Activated B cell treated with CpG ODN at 0.5 μM for 24 hours (primary cell): ENCODE measurements at regions of chr16 and their contacts with region 1.

Region 1: DNA sequence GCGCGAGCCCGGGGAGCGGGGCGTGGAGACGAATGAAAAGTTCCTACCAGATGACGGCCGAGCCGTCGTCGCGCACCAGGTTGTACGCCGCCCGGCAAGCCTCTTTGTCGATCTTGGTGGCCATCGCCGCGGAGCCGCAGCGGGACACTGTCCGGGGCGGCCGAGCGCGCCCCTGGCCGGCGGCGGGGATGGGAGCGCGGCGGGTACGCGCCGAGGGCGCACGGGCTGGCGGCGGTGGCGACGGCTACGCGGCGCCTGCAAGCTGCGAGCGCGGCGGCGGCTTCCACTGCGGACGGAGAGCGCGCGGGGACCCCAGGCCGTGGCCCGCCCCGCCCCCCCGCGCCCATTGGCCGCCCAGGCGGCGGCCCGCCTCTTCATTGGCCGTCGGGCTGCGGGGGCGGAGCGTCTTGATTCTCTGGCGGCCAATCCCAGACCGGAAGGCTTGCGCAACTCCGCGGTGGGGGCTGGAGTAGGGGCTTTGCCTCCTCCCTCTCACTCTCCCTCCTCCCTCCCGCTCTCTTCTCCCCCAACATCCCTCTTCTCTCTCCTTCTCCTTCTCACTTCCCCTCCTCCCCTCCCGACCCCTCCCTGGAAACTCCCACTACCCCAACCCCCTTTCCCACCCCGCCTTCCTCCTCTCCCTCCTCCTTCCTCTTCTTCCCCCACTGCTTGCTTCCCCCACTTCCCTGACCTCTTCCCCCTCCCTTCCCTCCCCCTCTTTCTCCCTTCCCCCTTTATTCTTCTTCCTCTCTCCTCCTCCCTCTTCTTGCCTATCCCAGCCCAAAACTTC is at the start of gene COTL1:
- DNase-seq: peak; percentile 86
- ATAC-seq: peak; percentile 87
- H3K4me3 Mint-ChIP-seq: peak within 1 kb of the TSS; percentile 94
- H3K27ac Mint-ChIP-seq: peak within 1 kb of the TSS; percentile 84
- H3K4me1 Mint-ChIP-seq: peaks cover 77% of the 10 kb centered on the region
- H3K27me3 Mint-ChIP-seq: no peaks in the 10 kb centered on the region
- CTCF ChIP-seq: no peak
- total RNA-seq, gene COTL1: 487 and 525 TPM in 2 replicates

Region 2: GRCh38 chr16:84294531-84295142 is 323.3 kb before region 1 on chr16 and contains the start of gene WFDC1:
- CTCF ChIA-PET with region 1: no interaction called
- POLR2A ChIA-PET with region 1: no interaction called
- intact Hi-C with region 1: no loop called
- DNase-seq: no peak
- ATAC-seq: no peak
- H3K4me3 Mint-ChIP-seq: no peak within 1 kb of the TSS
- H3K27ac Mint-ChIP-seq: no peak within 1 kb of the TSS
- H3K4me1 Mint-ChIP-seq: no peaks in the 10 kb centered on the region
- H3K27me3 Mint-ChIP-seq: peaks cover 43% of the 10 kb centered on the region
- CTCF ChIP-seq: no peak
- total RNA-seq, gene WFDC1: not detected in 2 replicates

Region 3: GRCh38 chr16:84562174-84562815 is 55.7 kb before region 1 on chr16:
- CTCF ChIA-PET with region 1: interaction called, 13 read pairs
- POLR2A ChIA-PET with region 1: interaction called, 12 read pairs
- intact Hi-C with region 1: loop called (anchors 1 kb)
- DNase-seq: peak; percentile 38
- ATAC-seq: peak; percentile 89
- H3K4me3 Mint-ChIP-seq: peak overlapping the region; percentile 32
- H3K27ac Mint-ChIP-seq: peak overlapping the region; percentile 87
- H3K4me1 Mint-ChIP-seq: peaks cover 36% of the 10 kb centered on the region
- H3K27me3 Mint-ChIP-seq: no peaks in the 10 kb centered on the region
- CTCF ChIP-seq: no peak

Region 4: DNA sequence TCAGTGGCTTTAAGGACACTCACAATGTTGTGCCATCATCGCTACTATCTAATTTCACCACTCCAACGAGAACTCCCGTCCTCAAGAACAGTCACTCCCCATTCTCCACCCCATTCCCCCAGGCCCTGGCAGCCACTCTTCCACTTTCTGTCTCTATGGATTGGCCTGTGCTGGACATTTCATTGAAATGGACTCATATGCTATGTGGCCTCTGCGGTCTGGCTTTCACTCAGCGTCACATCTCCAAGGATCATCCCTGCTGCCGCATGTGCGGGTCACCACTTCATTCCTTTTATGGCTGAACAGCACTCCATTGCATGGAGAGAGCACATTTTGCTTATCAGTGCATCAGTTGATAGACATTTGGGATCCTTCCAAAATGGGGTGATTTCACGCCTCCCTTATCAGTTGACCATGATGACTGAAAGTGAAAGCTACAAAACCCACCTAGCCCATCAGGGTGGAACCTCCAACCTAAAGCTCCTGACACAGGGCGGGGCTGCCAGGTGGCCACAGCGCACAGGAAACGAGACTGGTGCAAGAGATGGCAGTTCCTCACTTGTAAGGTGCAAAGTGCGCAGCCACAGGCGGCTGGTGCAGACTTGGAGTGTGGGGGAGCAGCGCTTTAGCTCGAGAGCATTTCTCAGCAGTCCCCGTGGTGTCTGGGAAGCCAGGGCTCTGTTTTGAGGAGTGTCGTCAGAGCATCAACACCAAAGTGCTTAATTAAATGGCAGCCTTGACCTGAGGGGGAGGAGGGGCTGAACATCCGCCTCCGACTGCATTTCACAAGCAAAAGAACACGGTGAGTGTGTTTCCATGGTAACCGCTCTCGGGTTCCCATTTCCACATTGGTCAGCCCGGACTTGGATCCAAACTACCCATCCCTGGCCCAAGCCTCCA is 23.9 kb before region 1 on chr16:
- CTCF ChIA-PET with region 1: interaction called, 9 read pairs
- POLR2A ChIA-PET with region 1: interaction called, 333 read pairs
- intact Hi-C with region 1: loop called (anchors 1 kb)
- DNase-seq: peak; percentile 65
- ATAC-seq: peak; percentile 82
- H3K4me3 Mint-ChIP-seq: peak overlapping the region; percentile 91
- H3K27ac Mint-ChIP-seq: peak overlapping the region; percentile 91
- H3K4me1 Mint-ChIP-seq: peaks cover 80% of the 10 kb centered on the region
- H3K27me3 Mint-ChIP-seq: no peaks in the 10 kb centered on the region
- CTCF ChIP-seq: no peak

Region 5: GRCh38 chr16:84629580-84629979 is 11.6 kb after region 1 on chr16:
- CTCF ChIA-PET with region 1: no interaction called
- POLR2A ChIA-PET with region 1: no interaction called
- intact Hi-C with region 1: no loop called
- DNase-seq: no peak
- ATAC-seq: no peak
- H3K4me3 Mint-ChIP-seq: no peak overlapping the region
- H3K27ac Mint-ChIP-seq: no peak overlapping the region
- H3K4me1 Mint-ChIP-seq: peaks cover 27% of the 10 kb centered on the region
- H3K27me3 Mint-ChIP-seq: no peaks in the 10 kb centered on the region
- CTCF ChIP-seq: no peak

Region 6: DNA sequence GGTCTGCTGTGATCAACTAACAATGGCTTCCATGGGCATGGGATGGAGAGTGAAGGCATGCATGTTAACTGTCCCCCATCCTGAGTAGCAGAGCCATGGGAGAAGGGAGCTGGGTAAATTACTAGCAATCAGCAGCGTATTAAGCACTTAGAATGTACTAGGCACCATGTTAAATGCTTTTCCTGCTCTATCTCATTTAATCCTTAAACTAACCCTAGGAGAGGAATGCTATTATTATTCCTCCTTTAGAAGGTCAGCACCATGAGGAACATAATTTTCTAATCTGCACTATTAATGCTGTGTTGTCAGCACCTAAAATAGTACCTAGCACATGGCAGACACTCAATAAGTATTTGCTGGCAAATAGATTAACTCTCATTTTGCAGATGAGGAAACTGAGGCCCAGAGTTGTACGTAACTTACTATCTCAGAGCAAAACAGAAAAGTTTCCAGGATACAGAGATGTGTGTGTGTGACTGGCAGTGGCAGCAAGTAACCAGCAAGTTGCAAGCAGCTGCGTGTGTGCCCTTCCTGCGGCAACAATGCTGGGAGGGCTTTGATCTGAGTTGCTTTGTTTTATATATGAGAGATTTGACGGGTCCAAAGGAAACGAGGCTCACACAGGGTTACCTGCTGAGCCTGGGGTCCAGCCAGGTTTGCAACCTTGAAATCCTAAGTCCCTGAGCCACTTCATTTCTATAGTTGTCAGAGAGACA is 23.8 kb after region 1 on chr16:
- CTCF ChIA-PET with region 1: interaction called, 6 read pairs
- POLR2A ChIA-PET with region 1: interaction called, 3 read pairs
- intact Hi-C with region 1: loop called (anchors 2 kb)
- DNase-seq: no peak
- ATAC-seq: no peak
- H3K4me3 Mint-ChIP-seq: peak overlapping the region; percentile 38
- H3K27ac Mint-ChIP-seq: peak overlapping the region; percentile 94
- H3K4me1 Mint-ChIP-seq: peaks cover 80% of the 10 kb centered on the region
- H3K27me3 Mint-ChIP-seq: no peaks in the 10 kb centered on the region
- CTCF ChIP-seq: no peak

Region 7: GRCh38 chr16:84726079-84726668 is 108.2 kb after region 1 on chr16:
- CTCF ChIA-PET with region 1: interaction called, 69 read pairs
- POLR2A ChIA-PET with region 1: no interaction called
- intact Hi-C with region 1: loop called (anchors 1 kb)
- DNase-seq: peak; percentile 73
- ATAC-seq: peak; percentile 51
- H3K4me3 Mint-ChIP-seq: peak overlapping the region; percentile 81
- H3K27ac Mint-ChIP-seq: peak overlapping the region; percentile 86
- H3K4me1 Mint-ChIP-seq: peaks cover 84% of the 10 kb centered on the region
- H3K27me3 Mint-ChIP-seq: no peaks in the 10 kb centered on the region
- CTCF ChIP-seq: peak; percentile 75

Region 8: GRCh38 chr16:84970447-84971127 is 352.6 kb after region 1 on chr16:
- CTCF ChIA-PET with region 1: interaction called, 6 read pairs
- POLR2A ChIA-PET with region 1: no interaction called
- intact Hi-C with region 1: loop called (anchors 1 kb)
- DNase-seq: peak; percentile 65
- ATAC-seq: peak; percentile 81
- H3K4me3 Mint-ChIP-seq: no peak overlapping the region
- H3K27ac Mint-ChIP-seq: no peak overlapping the region
- H3K4me1 Mint-ChIP-seq: peaks cover 4% of the 10 kb centered on the region
- H3K27me3 Mint-ChIP-seq: peaks cover 3% of the 10 kb centered on the region
- CTCF ChIP-seq: peak; percentile 53